ENCODE measurements at regions of chr14 and their contacts with region 1.

Region 1: DNA sequence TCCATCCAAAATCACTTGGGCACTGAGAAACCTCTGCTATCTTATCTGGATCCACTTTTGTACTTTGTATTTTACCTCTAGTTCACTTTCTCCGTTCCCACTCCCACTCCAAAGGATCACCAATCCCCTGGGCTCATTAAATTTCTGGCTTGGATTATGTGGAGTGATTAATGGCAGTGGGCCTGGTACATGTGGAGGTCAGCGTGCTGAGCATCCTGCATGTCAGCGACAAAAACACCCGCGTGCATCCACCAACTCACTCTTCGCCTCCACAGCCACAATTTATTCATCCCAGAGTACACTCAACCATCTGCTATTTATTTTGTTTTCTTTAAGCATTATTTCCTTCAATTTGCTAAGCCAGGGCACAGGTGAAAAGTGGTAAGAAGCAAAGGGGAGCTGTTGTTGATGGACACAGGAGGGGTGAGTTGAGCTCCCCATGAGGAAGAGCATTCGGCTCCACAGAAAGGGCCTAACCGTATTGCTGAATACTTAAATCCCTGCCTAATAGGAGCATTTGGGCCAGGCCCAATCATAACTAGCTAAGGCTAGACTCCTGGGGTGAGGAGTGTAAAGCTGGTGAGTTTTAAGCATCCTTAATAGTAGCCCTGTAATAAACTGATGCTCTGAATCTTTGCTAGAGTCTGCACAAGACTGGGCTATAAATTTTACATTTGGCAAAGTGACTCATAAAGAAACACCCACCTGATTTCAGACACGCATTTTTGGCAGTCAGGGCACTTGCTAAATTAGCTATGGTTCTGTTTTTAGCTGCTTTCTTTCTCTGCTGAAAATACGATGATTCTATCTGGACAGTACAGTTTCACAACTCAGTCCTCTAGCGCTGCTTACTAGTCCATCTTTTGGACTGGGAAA is 137.8 kb downstream of the SLC25A21 start:
- DNase-seq: peak in 1 of 2 donors; percentile 68
- H3K4me3 ChIP-seq: peak overlapping the region in 1 of 2 donors; percentile 17
- H3K27ac ChIP-seq: peak overlapping the region; percentile 87 to 93
- H3K4me1 ChIP-seq: peaks cover 3 to 21% of the 10 kb centered on the region in 2 donors
- H3K27me3 ChIP-seq: no peaks in the 10 kb centered on the region
- CTCF ChIP-seq: no peak

Region 2: GRCh38 chr14:36973806-36974442 is 60.7 kb before region 1 on chr14:
- intact Hi-C with region 1: loop called (anchors 5 kb)
- DNase-seq: no peak
- H3K4me3 ChIP-seq: no peak overlapping the region
- H3K27ac ChIP-seq: peak overlapping the region; percentile 68
- H3K4me1 ChIP-seq: peaks cover 0 to 10% of the 10 kb centered on the region in 2 donors
- H3K27me3 ChIP-seq: no peaks in the 10 kb centered on the region
- CTCF ChIP-seq: no peak

Region 3: GRCh38 chr14:36996133-36996856 is 38.4 kb before region 1 on chr14:
- intact Hi-C with region 1: loop called (anchors 2 kb)
- DNase-seq: no peak
- H3K4me3 ChIP-seq: no peak overlapping the region
- H3K27ac ChIP-seq: no peak overlapping the region
- H3K4me1 ChIP-seq: peaks cover 0 to 3% of the 10 kb centered on the region in 2 donors
- H3K27me3 ChIP-seq: no peaks in the 10 kb centered on the region
- CTCF ChIP-seq: no peak

Region 4: GRCh38 chr14:37122254-37122653 is 87.6 kb after region 1 on chr14:
- intact Hi-C with region 1: loop called (anchors 5 kb)
- DNase-seq: no peak
- H3K4me3 ChIP-seq: no peak overlapping the region
- H3K27ac ChIP-seq: no peak overlapping the region
- H3K4me1 ChIP-seq: peaks cover 0 to 4% of the 10 kb centered on the region in 2 donors
- H3K27me3 ChIP-seq: no peaks in the 10 kb centered on the region
- CTCF ChIP-seq: no peak

Region 5: GRCh38 chr14:37697489-37698121 is 663.0 kb after region 1 on chr14:
- intact Hi-C with region 1: no loop called
- DNase-seq: no peak
- H3K4me3 ChIP-seq: no peak overlapping the region
- H3K27ac ChIP-seq: no peak overlapping the region
- H3K4me1 ChIP-seq: no peaks in the 10 kb centered on the region
- H3K27me3 ChIP-seq: no peaks in the 10 kb centered on the region
- CTCF ChIP-seq: no peak

Measured in ascending aorta (tissue), 2 donors.